CD8-positive, alpha-beta memory T cell (primary cell): ENCODE measurements at regions of chr15 and their contacts with region 1.

Region 1: DNA sequence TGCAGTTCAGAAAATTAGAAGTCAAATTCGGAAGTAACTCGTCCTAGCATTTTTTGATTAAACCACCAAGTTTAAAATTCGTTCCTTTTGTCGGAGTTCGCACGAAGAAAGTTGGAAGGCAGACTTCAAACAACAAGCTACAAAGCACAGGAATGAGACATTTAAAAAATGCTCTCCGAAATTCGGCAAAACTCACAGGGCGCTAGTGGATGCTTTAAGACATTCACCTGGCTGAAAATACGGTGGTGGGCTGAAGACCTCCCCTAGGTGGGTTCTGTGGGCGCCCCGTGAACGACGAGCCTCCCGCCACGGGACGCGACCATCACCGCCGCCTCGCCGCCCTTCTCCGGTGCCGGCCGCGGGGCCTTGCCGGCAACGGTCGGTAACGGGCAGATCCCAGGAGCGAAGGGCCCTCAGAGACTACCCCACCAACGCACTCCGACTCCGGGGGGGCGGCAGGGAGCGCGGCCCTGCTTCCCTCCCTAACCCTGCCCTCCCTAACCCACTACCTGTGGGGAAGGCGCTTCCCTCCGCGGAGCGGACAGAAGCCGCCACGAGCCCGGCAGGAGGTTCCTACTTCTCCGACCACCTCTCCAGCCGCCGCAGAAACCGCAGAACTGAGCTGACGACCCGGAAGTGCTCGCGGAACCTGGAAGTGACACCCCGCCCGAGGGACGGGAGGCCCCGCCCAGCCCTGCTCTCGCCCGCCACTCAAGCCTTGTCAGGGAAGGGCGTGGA is at the start of gene GTF2A2:
- DNase-seq: peak; percentile 90 to 97 (median 94)
- H3K4me3 ChIP-seq: peak within 1 kb of the TSS; percentile 67
- H3K4me3 Mint-ChIP-seq: peak within 1 kb of the TSS in 5 of 7 donors; percentile 28 to 53 (median 49)
- H3K27ac ChIP-seq: peak within 1 kb of the TSS; percentile 86
- H3K27ac Mint-ChIP-seq: peak within 1 kb of the TSS in 4 of 8 donors; percentile 52 to 90 (median 86)
- H3K4me1 ChIP-seq: peaks cover 28% of the 10 kb centered on the region
- H3K4me1 Mint-ChIP-seq: peaks cover 7 to 15% (median 10%) of the 10 kb centered on the region in 3 donors
- H3K27me3 ChIP-seq: no peaks in the 10 kb centered on the region
- H3K27me3 Mint-ChIP-seq: peaks cover 0 to 2% of the 10 kb centered on the region in 2 donors
- total RNA-seq, gene GTF2A2: 228 to 230 TPM

Region 2: GRCh38 chr15:59420986-59421618 is 236.0 kb before region 1 on chr15:
- CTCF ChIA-PET with region 1: no interaction called
- POLR2A ChIA-PET with region 1: no interaction called
- DNase-seq: no peak
- H3K4me3 ChIP-seq: no peak overlapping the region
- H3K4me3 Mint-ChIP-seq: no peak overlapping the region
- H3K27ac ChIP-seq: no peak overlapping the region
- H3K27ac Mint-ChIP-seq: no peak overlapping the region
- H3K4me1 ChIP-seq: no peaks in the 10 kb centered on the region
- H3K4me1 Mint-ChIP-seq: peaks cover 14 to 16% (median 15%) of the 10 kb centered on the region in 3 donors
- H3K27me3 ChIP-seq: no peaks in the 10 kb centered on the region
- H3K27me3 Mint-ChIP-seq: peaks cover 5 to 16% of the 10 kb centered on the region in 2 donors

Region 3: DNA sequence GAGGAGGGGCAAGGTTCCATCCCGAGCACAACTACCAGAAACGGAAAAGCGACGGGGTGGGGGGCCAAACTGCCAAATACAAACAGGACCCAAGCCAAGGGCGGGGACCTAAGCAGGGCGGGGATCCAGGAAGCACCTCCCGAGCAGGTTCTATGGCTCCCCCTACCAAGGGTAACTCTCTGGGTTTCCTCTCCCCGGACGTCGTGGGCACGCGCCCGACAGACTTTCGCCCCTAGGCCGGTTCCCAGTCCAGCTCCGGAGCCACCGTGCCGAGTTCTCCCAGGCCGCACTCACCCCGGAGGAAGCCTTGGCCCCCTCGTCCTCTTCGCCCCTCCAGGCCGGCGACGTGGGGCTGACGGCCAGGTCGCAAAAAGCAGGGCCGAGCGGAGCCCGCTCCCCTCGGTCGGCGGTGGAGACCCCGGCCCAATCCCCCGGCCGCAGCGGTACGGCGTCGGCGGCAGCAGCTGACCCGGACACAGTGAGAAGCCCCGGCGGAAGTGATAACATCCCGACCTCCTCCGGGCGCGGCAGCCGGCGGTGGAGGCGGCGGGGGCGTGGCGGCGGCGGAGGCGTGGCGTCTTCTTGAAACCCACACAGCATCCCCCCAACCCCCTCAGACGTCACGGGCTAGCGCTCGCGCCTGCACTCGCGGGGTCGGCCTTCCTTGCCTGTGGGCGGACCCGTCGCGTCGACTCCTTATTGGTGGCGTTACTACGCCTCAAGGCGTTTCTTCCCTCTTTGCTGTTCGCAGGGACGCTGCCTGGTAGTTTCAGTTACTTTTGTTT is 32.0 kb after region 1 on chr15 and contains the start of gene BNIP2:
- CTCF ChIA-PET with region 1: interaction called, 4 read pairs
- POLR2A ChIA-PET with region 1: interaction called, 25 read pairs
- DNase-seq: peak; percentile 99 to 100 (median 99)
- H3K4me3 ChIP-seq: peak within 1 kb of the TSS; percentile 89
- H3K4me3 Mint-ChIP-seq: peak within 1 kb of the TSS; percentile 92 to 99 (median 96)
- H3K27ac ChIP-seq: peak within 1 kb of the TSS; percentile 99
- H3K27ac Mint-ChIP-seq: peak within 1 kb of the TSS; percentile 92 to 100 (median 99)
- H3K4me1 ChIP-seq: peaks cover 43% of the 10 kb centered on the region
- H3K4me1 Mint-ChIP-seq: peaks cover 42 to 58% (median 51%) of the 10 kb centered on the region in 3 donors
- H3K27me3 ChIP-seq: no peaks in the 10 kb centered on the region
- H3K27me3 Mint-ChIP-seq: no peaks in the 10 kb centered on the region
- total RNA-seq, gene BNIP2: 62.7 to 65.2 TPM

Region 4: GRCh38 chr15:59847968-59848367 is 190.9 kb after region 1 on chr15:
- CTCF ChIA-PET with region 1: no interaction called
- POLR2A ChIA-PET with region 1: no interaction called
- DNase-seq: no peak
- H3K4me3 ChIP-seq: no peak overlapping the region
- H3K4me3 Mint-ChIP-seq: no peak overlapping the region
- H3K27ac ChIP-seq: no peak overlapping the region
- H3K27ac Mint-ChIP-seq: peak overlapping the region in 1 of 8 donors; percentile 10
- H3K4me1 ChIP-seq: no peaks in the 10 kb centered on the region
- H3K4me1 Mint-ChIP-seq: no peaks in the 10 kb centered on the region
- H3K27me3 ChIP-seq: no peaks in the 10 kb centered on the region
- H3K27me3 Mint-ChIP-seq: peaks cover 12 to 24% of the 10 kb centered on the region in 2 donors

Region 5: DNA sequence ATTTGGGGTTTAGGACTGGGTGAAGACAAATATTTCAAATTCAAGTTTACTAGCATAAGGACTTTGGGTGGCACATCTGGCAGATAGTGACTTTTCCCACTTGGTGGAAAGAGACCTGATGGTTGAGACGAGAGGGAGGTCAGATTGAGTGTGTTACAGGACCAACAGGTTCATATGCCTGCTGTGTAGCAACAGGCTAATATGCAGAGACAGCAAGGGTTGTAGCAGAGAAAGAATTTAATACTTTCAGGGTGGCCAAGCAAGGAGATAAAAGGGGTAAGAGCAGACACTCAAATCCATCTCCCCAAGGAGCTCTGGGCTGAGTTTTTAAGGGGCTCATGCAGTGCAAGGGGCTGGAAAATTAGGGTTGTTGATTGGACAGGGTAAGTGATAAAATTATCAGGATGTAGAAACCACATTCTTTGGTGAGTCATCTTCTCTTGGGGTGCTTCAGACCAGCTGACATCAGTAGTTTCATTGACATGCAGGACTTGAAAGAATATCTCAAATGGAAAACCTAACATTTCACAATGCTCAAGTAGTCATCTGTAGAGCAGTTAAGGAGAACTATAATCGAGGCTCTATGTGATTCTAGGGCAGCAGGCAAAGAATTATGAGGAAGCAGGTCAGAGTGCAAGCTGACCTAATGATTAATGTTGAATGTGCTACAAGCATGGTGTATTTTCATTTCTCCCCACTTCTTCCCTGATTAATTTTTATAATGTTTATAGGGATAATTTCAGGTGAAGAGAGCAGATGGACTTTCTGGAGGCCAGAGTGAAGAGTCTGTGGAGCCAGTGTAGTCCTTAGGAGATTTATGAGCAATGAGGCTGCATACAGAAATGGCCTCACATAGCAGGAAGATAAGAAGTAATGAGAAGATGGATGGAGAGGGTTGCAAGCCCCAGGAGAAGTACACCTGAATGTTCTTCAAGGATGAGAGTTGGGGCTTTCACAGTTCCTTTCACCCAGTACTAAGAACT is 360.8 kb after region 1 on chr15:
- CTCF ChIA-PET with region 1: no interaction called
- POLR2A ChIA-PET with region 1: no interaction called
- DNase-seq: no peak
- H3K4me3 ChIP-seq: no peak overlapping the region
- H3K4me3 Mint-ChIP-seq: no peak overlapping the region
- H3K27ac ChIP-seq: no peak overlapping the region
- H3K27ac Mint-ChIP-seq: peak overlapping the region in 1 of 8 donors; percentile 28
- H3K4me1 ChIP-seq: no peaks in the 10 kb centered on the region
- H3K4me1 Mint-ChIP-seq: peaks cover 8 to 17% (median 11%) of the 10 kb centered on the region in 3 donors
- H3K27me3 ChIP-seq: no peaks in the 10 kb centered on the region
- H3K27me3 Mint-ChIP-seq: peaks cover 40 to 83% of the 10 kb centered on the region in 2 donors